HepG2 (cell line): ENCODE measurements at regions of chr7 and their contacts with region 1.

Region 1: DNA sequence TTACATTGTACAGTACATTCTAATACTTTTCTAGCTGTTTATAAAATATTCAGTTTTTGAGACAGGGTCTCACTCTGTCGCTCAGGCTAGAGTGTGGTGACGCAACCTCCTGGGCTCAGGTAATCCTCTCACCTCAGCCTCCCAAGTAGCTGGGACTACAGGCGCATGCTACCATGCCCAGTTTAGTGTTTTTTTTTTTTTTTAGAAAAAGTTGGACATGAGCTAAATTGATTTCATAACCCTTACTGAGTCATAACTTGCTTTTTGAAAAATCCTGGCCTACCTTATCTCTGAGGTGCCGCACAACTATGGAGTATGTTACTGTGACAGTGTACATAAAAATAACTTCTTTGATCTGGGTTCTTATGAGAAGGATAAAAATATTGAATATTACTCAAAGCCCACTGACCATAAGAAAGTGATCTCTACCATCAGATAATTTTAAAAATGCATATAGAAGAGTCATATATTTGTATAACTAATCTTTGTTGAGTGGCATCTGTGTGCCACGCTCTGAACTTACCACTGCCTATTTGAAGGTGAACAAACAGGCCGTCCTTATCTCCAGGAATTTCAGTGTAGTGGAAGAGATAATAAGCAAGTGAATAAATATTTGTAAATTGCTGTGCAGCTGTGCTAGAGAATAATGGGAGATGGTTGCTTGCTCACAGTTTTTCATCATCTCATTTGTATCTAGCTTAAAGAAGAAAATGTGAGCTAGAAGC is 73.2 kb downstream of the PPP1R9A start:
- DNase-seq: peak; percentile 94
- ATAC-seq: peak; percentile 99
- H3K4me3 ChIP-seq: peak overlapping the region in 2 of 3 experiments; percentile 26 to 29; a peak in 2 of 6 replicates
- H3K27ac ChIP-seq: peak overlapping the region; percentile 52
- H3K4me1 ChIP-seq: peaks cover 26% of the 10 kb centered on the region
- H3K27me3 ChIP-seq: no peaks in the 10 kb centered on the region
- CTCF ChIP-seq: no peak
- EP300 ChIP-seq: peak in 1 of 2 experiments; percentile 89; a peak in 2 of 4 replicates
- POLR2A ChIP-seq: no peak
- RAD21 ChIP-seq: no peak

Region 2: GRCh38 chr7:94452239-94452638 is 528.3 kb before region 1 on chr7:
- CTCF ChIA-PET with region 1: no interaction called
- POLR2A ChIA-PET with region 1: no interaction called
- in situ Hi-C with region 1: no loop called
- intact Hi-C with region 1: no loop called
- DNase-seq: no peak
- ATAC-seq: no peak
- H3K4me3 ChIP-seq: no peak overlapping the region
- H3K27ac ChIP-seq: no peak overlapping the region
- H3K4me1 ChIP-seq: peaks cover 33% of the 10 kb centered on the region
- H3K27me3 ChIP-seq: no peaks in the 10 kb centered on the region
- CTCF ChIP-seq: no peak
- EP300 ChIP-seq: no peak
- POLR2A ChIP-seq: no peak
- RAD21 ChIP-seq: no peak

Region 3: DNA sequence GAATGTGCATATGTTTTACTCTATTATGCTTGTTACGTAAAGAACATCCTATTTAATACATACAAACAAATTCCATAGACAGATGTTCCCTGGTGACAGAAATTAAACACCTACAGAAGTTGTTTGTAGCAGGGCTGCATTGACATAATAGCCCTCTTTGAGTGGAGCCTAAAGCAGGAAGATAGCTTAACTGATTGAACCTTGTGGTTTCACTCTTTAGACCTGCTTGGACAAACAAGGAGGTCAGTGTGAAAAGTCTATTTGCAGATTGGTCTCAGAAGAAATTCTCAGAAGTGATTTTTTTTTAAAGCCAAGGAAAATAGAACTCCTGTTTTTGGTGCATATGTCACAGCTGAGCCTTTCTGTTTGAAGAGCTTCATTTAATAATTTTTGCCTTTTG is 48.1 kb after region 1 on chr7:
- CTCF ChIA-PET with region 1: no interaction called
- POLR2A ChIA-PET with region 1: no interaction called
- in situ Hi-C with region 1: no loop called
- intact Hi-C with region 1: loop called (anchors 5 kb)
- DNase-seq: peak; percentile 92
- ATAC-seq: peak; percentile 98
- H3K4me3 ChIP-seq: peak overlapping the region in 1 of 3 experiments; percentile 32; a peak in 1 of 6 replicates
- H3K27ac ChIP-seq: peak overlapping the region; percentile 68
- H3K4me1 ChIP-seq: peaks cover 57% of the 10 kb centered on the region
- H3K27me3 ChIP-seq: no peaks in the 10 kb centered on the region
- CTCF ChIP-seq: no peak
- EP300 ChIP-seq: peak in 1 of 2 experiments; percentile 95; a peak in 2 of 4 replicates
- POLR2A ChIP-seq: no peak
- RAD21 ChIP-seq: no peak

Region 4: DNA sequence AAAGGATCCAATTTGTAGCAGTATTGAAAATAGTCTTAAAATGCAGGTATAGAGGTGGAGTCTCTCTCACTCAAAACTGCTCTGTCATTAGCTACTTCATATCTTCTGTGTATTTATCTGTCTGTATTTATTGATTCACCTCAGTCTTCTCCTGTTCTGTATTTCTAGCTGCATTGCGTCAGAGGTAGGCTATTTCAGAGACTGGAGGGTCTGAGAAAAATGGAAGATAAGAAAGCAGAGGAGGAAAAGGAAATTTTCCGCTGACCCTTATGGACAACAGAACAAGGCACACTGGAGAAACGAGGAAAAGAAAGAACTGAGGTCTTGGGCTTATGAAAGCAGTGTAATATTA is 284.0 kb after region 1 on chr7:
- CTCF ChIA-PET with region 1: no interaction called
- POLR2A ChIA-PET with region 1: no interaction called
- in situ Hi-C with region 1: no loop called
- intact Hi-C with region 1: no loop called
- DNase-seq: no peak
- ATAC-seq: no peak
- H3K4me3 ChIP-seq: no peak overlapping the region
- H3K27ac ChIP-seq: no peak overlapping the region
- H3K4me1 ChIP-seq: no peaks in the 10 kb centered on the region
- H3K27me3 ChIP-seq: no peaks in the 10 kb centered on the region
- CTCF ChIP-seq: no peak
- EP300 ChIP-seq: no peak
- POLR2A ChIP-seq: no peak
- RAD21 ChIP-seq: no peak